Caco-2 (cell line): ENCODE measurements at regions of chr20 and their contacts with region 1.

Region 1: GRCh38 chr20:1764136-1765033 is 106.8 kb upstream of the SIRPG start:
- DNase-seq: peak; percentile 77 to 83
- H3K4me3 ChIP-seq: no peak overlapping the region
- H3K4me3 Mint-ChIP-seq: no peak overlapping the region
- H3K27ac Mint-ChIP-seq: no peak overlapping the region
- H3K4me1 ChIP-seq: no peaks in the 10 kb centered on the region
- H3K4me1 Mint-ChIP-seq: no peaks in the 10 kb centered on the region
- H3K27me3 ChIP-seq: no peaks in the 10 kb centered on the region
- H3K27me3 Mint-ChIP-seq: peaks cover 9% of the 10 kb centered on the region
- CTCF ChIP-seq: peak; percentile 80 to 92

Region 2: GRCh38 chr20:1776681-1777475 is 12.5 kb after region 1 on chr20:
- CTCF ChIA-PET with region 1: interaction called, 28 read pairs
- POLR2A ChIA-PET with region 1: no interaction called
- intact Hi-C with region 1: loop called (anchors 1 kb)
- DNase-seq: peak; percentile 88 to 94
- H3K4me3 ChIP-seq: peak overlapping the region; percentile 47
- H3K4me3 Mint-ChIP-seq: peak overlapping the region; percentile 69
- H3K27ac Mint-ChIP-seq: peak overlapping the region; percentile 51
- H3K4me1 ChIP-seq: peaks cover 18% of the 10 kb centered on the region; the same call in 1 of the 2 replicates
- H3K4me1 Mint-ChIP-seq: peaks cover 21% of the 10 kb centered on the region
- H3K27me3 ChIP-seq: no peaks in the 10 kb centered on the region
- H3K27me3 Mint-ChIP-seq: peaks cover 6% of the 10 kb centered on the region
- CTCF ChIP-seq: peak; percentile 82 to 90

Region 3: DNA sequence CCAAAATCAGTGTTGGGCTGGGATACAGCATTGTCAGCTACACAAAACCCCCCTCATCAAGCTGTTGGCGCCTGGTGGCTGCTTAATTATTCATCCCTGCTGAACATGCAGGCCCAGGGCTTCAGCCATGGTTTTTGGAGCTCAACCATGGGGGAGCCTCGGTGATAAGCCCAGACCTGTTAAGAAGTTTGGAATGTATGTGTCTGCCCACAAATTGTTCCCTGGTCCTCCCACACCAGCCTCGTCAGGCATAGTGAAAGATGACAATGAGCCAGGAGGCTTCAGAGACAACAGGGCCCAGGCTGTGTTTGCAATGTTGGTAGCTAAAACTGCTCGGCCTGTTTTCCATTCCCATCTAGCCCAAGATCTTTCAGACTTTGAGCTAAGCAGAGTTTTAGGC is 96.1 kb after region 1 on chr20:
- CTCF ChIA-PET with region 1: no interaction called
- POLR2A ChIA-PET with region 1: no interaction called
- intact Hi-C with region 1: no loop called
- DNase-seq: no peak
- H3K4me3 ChIP-seq: no peak overlapping the region
- H3K4me3 Mint-ChIP-seq: no peak overlapping the region
- H3K27ac Mint-ChIP-seq: no peak overlapping the region
- H3K4me1 ChIP-seq: peaks cover 30% of the 10 kb centered on the region
- H3K4me1 Mint-ChIP-seq: peaks cover 18% of the 10 kb centered on the region
- H3K27me3 ChIP-seq: no peaks in the 10 kb centered on the region
- H3K27me3 Mint-ChIP-seq: no peaks in the 10 kb centered on the region
- CTCF ChIP-seq: no peak

Region 4: GRCh38 chr20:1965520-1966351 is 201.4 kb after region 1 on chr20:
- CTCF ChIA-PET with region 1: no interaction called
- POLR2A ChIA-PET with region 1: no interaction called
- intact Hi-C with region 1: loop called (anchors 2 kb)
- DNase-seq: peak; percentile 74 to 87
- H3K4me3 ChIP-seq: no peak overlapping the region
- H3K4me3 Mint-ChIP-seq: peak overlapping the region; percentile 12
- H3K27ac Mint-ChIP-seq: no peak overlapping the region
- H3K4me1 ChIP-seq: no peaks in the 10 kb centered on the region
- H3K4me1 Mint-ChIP-seq: peaks cover 7% of the 10 kb centered on the region
- H3K27me3 ChIP-seq: no peaks in the 10 kb centered on the region
- H3K27me3 Mint-ChIP-seq: peaks cover 20% of the 10 kb centered on the region
- CTCF ChIP-seq: peak; percentile 93 to 97

Region 5: DNA sequence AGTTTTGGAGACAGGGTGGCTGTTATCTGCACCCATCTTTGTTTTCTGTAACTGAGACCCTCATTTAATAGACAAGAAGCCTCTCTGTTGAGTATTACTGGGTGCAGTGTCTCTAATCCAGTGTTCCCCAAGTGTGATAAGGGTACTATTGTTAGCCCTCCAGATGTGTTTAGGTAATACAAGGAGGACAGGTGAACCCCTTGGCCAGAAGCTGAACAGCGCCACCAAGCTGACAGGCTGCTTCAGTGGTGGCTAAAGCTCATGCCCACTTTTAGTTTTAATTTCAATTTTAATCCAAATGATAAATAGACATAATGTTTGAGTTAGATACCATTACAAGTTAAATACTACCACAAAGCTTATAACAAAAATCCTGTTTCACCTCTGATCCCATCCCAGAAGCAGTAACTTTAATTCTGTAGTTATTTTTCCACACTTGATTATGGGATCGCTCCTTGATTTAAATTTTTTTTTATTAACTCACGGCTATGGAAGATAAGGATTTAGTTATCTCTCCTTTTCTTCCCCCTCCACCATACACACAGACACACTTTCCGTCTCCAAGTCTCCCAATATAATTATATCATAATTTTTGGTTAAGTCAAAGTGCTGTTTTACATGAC is 328.9 kb after region 1 on chr20:
- CTCF ChIA-PET with region 1: no interaction called
- POLR2A ChIA-PET with region 1: no interaction called
- intact Hi-C with region 1: loop called (anchors 10 kb)
- DNase-seq: peak; percentile 62 to 67
- H3K4me3 ChIP-seq: no peak overlapping the region
- H3K4me3 Mint-ChIP-seq: no peak overlapping the region
- H3K27ac Mint-ChIP-seq: no peak overlapping the region
- H3K4me1 ChIP-seq: no peaks in the 10 kb centered on the region
- H3K4me1 Mint-ChIP-seq: no peaks in the 10 kb centered on the region
- H3K27me3 ChIP-seq: no peaks in the 10 kb centered on the region; the same call in 1 of the 2 replicates
- H3K27me3 Mint-ChIP-seq: peaks cover 21% of the 10 kb centered on the region
- CTCF ChIP-seq: peak; percentile 69 to 89

Region 6: GRCh38 chr20:2172305-2173175 is 408.2 kb after region 1 on chr20:
- CTCF ChIA-PET with region 1: interaction called, 6 read pairs
- POLR2A ChIA-PET with region 1: no interaction called
- intact Hi-C with region 1: loop called (anchors 10 kb)
- DNase-seq: peak; percentile 70 to 79
- H3K4me3 ChIP-seq: no peak overlapping the region
- H3K4me3 Mint-ChIP-seq: peak overlapping the region; percentile 47
- H3K27ac Mint-ChIP-seq: no peak overlapping the region
- H3K4me1 ChIP-seq: no peaks in the 10 kb centered on the region
- H3K4me1 Mint-ChIP-seq: peaks cover 13% of the 10 kb centered on the region
- H3K27me3 ChIP-seq: no peaks in the 10 kb centered on the region
- H3K27me3 Mint-ChIP-seq: peaks cover 18% of the 10 kb centered on the region
- CTCF ChIP-seq: peak; percentile 94 to 95